ENCODE measurements at regions of chr17 and their contacts with region 1.

Region 1: GRCh38 chr17:38454516-38454915 is 26.3 kb downstream of the ARHGAP23 start:
- DNase-seq: no peak
- ATAC-seq: no peak
- H3K4me3 Mint-ChIP-seq: peak overlapping the region; percentile 62
- H3K27ac Mint-ChIP-seq: peak overlapping the region; percentile 84
- H3K4me1 Mint-ChIP-seq: peaks cover 65% of the 10 kb centered on the region
- H3K27me3 Mint-ChIP-seq: 0 out of 2 replicates have a peak, but pooled peaks cover 2% of the 10 kb centered on the region
- CTCF ChIP-seq: no peak

Region 2: DNA sequence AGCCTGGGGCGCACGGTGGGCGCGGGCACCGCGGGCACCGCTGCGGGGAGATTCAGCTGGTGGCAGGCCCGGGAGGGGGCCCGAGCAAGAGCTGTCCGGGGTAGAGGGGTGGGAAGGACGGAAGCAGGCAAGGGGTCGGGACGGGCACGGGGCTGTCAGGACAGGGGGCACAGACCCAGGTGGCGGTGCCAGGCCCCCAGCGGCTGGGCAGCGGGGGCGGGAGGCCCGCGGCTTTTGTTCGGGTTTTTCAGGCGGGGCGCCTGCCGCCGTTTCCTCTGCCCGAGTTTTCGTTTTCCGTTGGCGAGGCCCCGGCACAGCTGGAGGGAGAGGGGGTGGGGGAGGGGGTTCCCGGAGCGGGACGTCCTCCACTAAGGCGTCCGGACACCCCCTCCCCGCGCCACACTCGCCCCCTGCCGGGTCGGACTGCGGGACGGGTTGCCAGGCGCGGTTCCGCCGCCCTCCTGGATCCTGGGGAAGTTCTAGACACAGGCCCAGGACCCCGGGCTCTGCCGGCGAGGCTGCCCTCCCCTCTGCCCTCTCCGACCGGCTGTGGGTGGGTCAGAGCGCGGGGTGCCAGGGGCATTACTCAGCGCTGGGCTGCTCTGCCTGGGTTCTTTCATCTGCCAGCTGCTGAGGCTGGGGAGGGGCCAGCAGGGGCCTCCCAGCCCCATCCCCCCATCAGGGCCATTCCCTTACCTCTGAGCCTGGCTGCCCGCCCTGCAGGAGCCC is 25.7 kb before region 1 on chr17:
- CTCF ChIA-PET with region 1: interaction called, 70 read pairs
- POLR2A ChIA-PET with region 1: interaction called, 9 read pairs
- DNase-seq: no peak
- ATAC-seq: peak; percentile 18
- H3K4me3 Mint-ChIP-seq: peak overlapping the region; percentile 61
- H3K27ac Mint-ChIP-seq: no peak overlapping the region
- H3K4me1 Mint-ChIP-seq: peaks cover 57% of the 10 kb centered on the region
- H3K27me3 Mint-ChIP-seq: peaks cover 11% of the 10 kb centered on the region
- CTCF ChIP-seq: no peak

Region 3: DNA sequence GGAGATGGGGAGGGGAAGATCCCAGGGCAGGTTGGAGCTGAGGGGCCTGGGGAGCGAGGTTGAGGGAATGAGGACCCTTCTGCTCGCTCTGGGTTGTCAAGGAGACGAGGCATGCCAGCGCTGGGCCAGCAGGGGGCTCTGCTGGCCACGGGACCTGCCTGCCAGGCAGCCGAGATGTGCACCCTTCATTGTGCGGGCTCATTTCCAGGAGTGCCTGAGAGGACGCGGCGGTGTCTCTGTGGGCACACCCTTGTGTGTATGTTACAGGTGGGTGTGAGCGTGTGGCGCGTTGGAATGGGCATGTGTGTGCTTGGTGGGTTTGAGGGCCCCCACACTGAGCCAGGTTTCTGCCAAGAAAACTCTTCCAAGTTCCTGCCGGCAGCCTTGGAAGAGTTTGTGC is 10.4 kb before region 1 on chr17:
- CTCF ChIA-PET with region 1: interaction called, 44 read pairs
- POLR2A ChIA-PET with region 1: interaction called, 28 read pairs
- DNase-seq: peak; percentile 76
- ATAC-seq: peak; percentile 70
- H3K4me3 Mint-ChIP-seq: no peak overlapping the region
- H3K27ac Mint-ChIP-seq: no peak overlapping the region
- H3K4me1 Mint-ChIP-seq: peaks cover 57% of the 10 kb centered on the region
- H3K27me3 Mint-ChIP-seq: no peaks in the 10 kb centered on the region
- CTCF ChIP-seq: peak; percentile 78